Heart left ventricle (tissue), 16 donors: ENCODE measurements at regions of chr9 and their contacts with region 1.

Region 1: DNA sequence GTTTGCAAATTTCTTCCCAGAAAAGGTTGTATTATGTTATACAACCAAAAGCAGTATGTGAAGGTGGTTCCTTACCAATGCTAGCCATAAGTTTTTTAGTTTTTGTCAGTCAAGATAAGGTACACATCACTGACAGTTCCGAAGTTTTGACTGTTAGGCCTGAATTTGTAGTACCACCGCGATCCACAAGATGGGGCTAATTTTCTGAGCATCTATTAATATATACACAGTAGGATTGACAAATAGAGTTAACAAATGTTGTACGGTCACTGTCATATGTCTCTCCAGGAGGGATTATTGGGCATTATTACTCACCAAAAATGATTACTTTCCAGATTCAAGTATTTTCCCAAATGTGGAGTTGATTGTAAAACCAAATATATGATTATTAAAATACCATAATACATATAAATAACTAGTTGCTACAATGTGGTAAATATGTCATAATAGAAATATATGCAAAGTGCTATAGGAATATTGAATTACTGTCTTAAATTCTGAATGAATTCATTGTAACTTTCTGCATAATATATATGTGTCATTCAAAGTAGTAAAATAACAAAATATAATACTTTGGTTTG is 28.4 kb upstream of the LRRC19 start:
- DNase-seq: peak in 4 of 5 donors; percentile 21 to 39 (median 37)
- ATAC-seq: peak in 3 of 4 donors; percentile 51 to 68 (median 53)
- H3K4me3 ChIP-seq: no peak overlapping the region
- H3K27ac ChIP-seq: no peak overlapping the region
- H3K4me1 ChIP-seq: no peaks in the 10 kb centered on the region
- H3K27me3 ChIP-seq: no peaks in the 10 kb centered on the region
- CTCF ChIP-seq: peak; percentile 73 to 92 (median 80)
- POLR2A ChIP-seq: no peak

Region 2: GRCh38 chr9:26524267-26524666 is 509.6 kb before region 1 on chr9:
- intact Hi-C with region 1: no loop called
- DNase-seq: peak in 1 of 5 donors; percentile 13
- ATAC-seq: peak in 1 of 4 donors; percentile 29
- H3K4me3 ChIP-seq: no peak overlapping the region
- H3K27ac ChIP-seq: no peak overlapping the region
- H3K4me1 ChIP-seq: peaks cover 0 to 3% (median 0%) of the 10 kb centered on the region in 12 donors
- H3K27me3 ChIP-seq: no peaks in the 10 kb centered on the region
- CTCF ChIP-seq: no peak
- POLR2A ChIP-seq: no peak

Region 3: DNA sequence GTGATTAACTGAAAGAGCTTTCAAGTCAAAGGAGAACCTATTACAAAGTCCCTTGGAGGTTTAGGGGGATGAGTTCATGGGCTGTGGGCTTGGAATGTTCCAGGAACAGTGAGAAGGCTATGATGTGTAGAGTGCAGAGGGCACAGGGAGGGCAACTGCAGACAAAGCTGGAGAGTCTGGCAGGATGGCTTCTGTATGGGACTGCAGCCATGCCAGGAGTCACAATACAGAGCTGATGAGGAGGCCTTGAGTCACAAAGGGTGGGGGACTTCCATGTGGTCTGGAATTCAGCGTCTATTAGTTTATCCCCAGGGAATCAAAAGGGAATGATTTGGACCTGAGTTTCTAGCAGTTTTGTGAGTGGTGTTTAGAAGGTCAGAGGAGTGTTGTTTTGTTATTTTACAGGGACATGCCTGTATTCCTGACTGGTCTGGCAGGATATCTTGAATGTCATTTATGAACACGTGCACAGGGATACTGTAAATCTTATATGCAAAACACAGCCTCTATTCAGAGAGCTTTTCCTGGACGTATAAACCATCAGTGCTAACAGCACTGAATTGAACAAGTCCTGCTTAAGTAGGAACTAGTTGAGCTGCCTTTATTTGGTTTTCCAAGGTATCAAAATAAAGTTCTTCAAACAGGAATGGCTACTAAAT is 60.9 kb after region 1 on chr9:
- intact Hi-C with region 1: loop called in 3 of 10 experiments (anchors 10 kb)
- DNase-seq: peak in 1 of 5 donors; percentile 41
- ATAC-seq: peak in 3 of 4 donors; percentile 73 to 78 (median 75)
- H3K4me3 ChIP-seq: no peak overlapping the region
- H3K27ac ChIP-seq: peak overlapping the region in 3 of 12 donors; percentile 18 to 35 (median 24)
- H3K4me1 ChIP-seq: peaks cover 0 to 10% (median 0%) of the 10 kb centered on the region in 12 donors
- H3K27me3 ChIP-seq: no peaks in the 10 kb centered on the region
- CTCF ChIP-seq: no peak
- POLR2A ChIP-seq: no peak

Region 4: DNA sequence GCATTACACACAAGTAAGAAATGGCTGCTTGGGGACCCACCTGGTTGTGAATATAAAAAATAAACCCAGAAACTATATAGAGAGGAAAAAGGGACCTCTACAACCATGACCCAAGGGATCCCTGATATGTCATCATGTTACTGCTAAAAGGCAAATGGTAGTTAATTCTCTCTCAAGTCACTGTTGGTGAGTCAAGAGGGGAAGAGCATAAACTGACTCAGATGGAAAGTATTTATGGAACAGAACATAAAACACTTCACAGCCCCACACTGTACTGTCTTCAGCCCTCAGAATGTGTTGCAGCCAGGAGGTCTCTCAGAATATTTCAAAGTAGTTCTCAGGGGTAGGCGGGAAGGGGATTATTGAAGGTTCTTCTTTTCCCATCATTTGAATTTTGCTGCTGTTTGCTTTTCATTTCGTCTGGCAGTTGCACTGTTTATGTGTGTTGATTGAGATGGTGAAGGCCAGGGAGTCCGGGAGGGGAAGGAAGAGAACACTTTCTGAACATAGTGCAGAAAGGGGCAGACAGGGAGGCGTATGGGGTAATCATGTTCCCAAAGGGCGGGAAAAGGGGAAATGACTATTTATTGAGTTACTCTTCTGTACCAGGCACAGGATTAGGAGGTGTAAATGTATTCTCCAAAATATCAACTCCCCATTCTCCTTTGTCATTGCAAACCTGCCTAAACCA is 160.6 kb after region 1 on chr9:
- intact Hi-C with region 1: loop called in 3 of 10 experiments (anchors 5 to 10 kb)
- DNase-seq: no peak
- ATAC-seq: peak in 1 of 4 donors; percentile 27
- H3K4me3 ChIP-seq: no peak overlapping the region
- H3K27ac ChIP-seq: peak overlapping the region in 1 of 12 donors; percentile 25
- H3K4me1 ChIP-seq: peaks cover 0 to 52% (median 5%) of the 10 kb centered on the region in 12 donors
- H3K27me3 ChIP-seq: no peaks in the 10 kb centered on the region
- CTCF ChIP-seq: no peak
- POLR2A ChIP-seq: no peak

Region 5: GRCh38 chr9:27204578-27204977 is 170.7 kb after region 1 on chr9:
- intact Hi-C with region 1: loop called in 4 of 10 experiments (anchors 10 kb)
- DNase-seq: no peak
- ATAC-seq: no peak
- H3K4me3 ChIP-seq: no peak overlapping the region
- H3K27ac ChIP-seq: no peak overlapping the region
- H3K4me1 ChIP-seq: no peaks in the 10 kb centered on the region
- H3K27me3 ChIP-seq: no peaks in the 10 kb centered on the region
- CTCF ChIP-seq: no peak
- POLR2A ChIP-seq: no peak

Region 6: DNA sequence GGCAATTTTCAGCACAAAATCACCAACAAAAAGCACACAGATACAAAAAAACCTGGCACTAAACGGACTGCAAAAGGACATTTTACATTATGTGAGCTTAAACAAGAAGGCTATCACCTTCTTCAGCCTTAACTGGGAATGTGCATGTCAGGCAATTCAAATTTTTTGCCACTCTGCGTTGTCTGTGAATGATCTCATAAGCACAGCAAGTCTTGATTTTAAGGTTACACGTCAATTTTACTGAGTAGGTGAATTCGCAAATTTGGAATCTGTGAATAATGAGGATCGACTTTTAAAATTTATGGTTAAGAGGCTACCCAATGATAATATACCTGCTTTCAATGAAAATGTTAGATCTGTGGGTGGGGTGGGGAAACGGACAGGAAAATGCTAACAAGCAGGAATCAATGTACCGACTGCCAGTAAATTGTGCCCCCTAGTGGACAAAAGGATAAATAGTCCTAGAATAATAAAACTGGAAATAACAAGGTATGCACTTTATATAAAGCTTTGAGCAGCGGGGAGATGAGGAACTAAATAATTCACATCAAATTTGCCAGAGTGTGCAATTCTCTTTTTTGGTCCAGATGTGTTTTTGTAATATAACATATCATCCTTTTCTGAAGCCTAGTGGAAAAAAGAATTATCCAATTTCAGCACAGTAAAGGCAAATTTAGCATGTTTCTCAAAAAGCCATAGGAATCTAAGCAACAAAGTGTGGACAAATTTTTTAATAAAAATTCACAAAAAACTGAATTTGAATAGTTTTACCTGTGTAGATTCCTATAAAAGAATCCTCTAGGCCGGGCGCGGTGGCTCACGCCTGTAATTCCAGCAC is 242.5 kb after region 1 on chr9:
- intact Hi-C with region 1: loop called (anchors 1 to 5 kb)
- DNase-seq: no peak
- ATAC-seq: peak in 1 of 4 donors; percentile 56
- H3K4me3 ChIP-seq: peak overlapping the region in 3 of 12 donors; percentile 11 to 22 (median 13)
- H3K27ac ChIP-seq: no peak overlapping the region
- H3K4me1 ChIP-seq: peaks cover 0 to 19% (median 0%) of the 10 kb centered on the region in 12 donors
- H3K27me3 ChIP-seq: no peaks in the 10 kb centered on the region
- CTCF ChIP-seq: peak; percentile 55 to 92 (median 80)
- POLR2A ChIP-seq: no peak

Region 7: GRCh38 chr9:27447031-27447683 is 413.2 kb after region 1 on chr9:
- intact Hi-C with region 1: no loop called
- DNase-seq: no peak
- ATAC-seq: no peak
- H3K4me3 ChIP-seq: no peak overlapping the region
- H3K27ac ChIP-seq: no peak overlapping the region
- H3K4me1 ChIP-seq: peaks cover 0 to 14% (median 4%) of the 10 kb centered on the region in 12 donors
- H3K27me3 ChIP-seq: no peaks in the 10 kb centered on the region
- CTCF ChIP-seq: no peak
- POLR2A ChIP-seq: no peak

Region 8: DNA sequence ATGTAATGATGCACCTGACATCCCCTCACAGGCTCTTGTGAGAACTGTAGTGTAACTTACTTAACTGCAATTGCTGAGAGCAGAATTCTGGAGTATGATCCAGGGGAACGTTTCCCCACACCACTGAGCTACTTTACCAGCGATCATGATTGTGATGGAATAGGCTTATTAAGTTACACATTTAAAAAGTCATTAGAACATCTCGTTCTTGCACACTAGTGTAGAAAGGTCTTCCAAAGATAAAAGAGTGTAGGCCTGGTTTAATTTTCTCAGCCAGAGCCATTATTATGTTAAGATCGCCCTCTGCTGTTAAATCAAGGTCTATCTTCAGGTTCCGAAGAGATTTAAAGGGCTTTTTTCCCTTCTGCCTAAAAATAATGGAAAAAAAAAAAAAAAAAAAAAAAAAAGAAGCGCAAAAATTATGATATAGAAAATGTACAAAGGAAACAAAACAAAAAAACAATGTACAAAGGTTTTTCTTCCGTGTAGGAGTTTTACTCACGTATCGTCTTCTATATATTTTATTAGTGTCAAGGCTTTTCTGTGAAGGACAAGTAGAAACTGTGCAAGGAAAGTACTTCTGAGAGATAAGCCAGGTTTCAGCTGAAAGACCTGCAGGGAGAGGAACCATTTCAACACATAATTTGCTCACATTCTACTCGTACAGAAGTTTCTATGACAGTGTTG is 514.3 kb after region 1 on chr9:
- intact Hi-C with region 1: loop called in 2 of 10 experiments (anchors 10 kb)
- DNase-seq: no peak
- ATAC-seq: peak; percentile 77 to 88 (median 84)
- H3K4me3 ChIP-seq: no peak overlapping the region
- H3K27ac ChIP-seq: peak overlapping the region in 3 of 12 donors; percentile 2 to 39 (median 34)
- H3K4me1 ChIP-seq: peaks cover 0 to 6% (median 0%) of the 10 kb centered on the region in 12 donors
- H3K27me3 ChIP-seq: no peaks in the 10 kb centered on the region
- CTCF ChIP-seq: peak; percentile 25 to 67 (median 54)
- POLR2A ChIP-seq: no peak